Cardiac septum (tissue), 1 donor: ENCODE measurements at regions of chr3 and their contacts with region 1.

Region 1: DNA sequence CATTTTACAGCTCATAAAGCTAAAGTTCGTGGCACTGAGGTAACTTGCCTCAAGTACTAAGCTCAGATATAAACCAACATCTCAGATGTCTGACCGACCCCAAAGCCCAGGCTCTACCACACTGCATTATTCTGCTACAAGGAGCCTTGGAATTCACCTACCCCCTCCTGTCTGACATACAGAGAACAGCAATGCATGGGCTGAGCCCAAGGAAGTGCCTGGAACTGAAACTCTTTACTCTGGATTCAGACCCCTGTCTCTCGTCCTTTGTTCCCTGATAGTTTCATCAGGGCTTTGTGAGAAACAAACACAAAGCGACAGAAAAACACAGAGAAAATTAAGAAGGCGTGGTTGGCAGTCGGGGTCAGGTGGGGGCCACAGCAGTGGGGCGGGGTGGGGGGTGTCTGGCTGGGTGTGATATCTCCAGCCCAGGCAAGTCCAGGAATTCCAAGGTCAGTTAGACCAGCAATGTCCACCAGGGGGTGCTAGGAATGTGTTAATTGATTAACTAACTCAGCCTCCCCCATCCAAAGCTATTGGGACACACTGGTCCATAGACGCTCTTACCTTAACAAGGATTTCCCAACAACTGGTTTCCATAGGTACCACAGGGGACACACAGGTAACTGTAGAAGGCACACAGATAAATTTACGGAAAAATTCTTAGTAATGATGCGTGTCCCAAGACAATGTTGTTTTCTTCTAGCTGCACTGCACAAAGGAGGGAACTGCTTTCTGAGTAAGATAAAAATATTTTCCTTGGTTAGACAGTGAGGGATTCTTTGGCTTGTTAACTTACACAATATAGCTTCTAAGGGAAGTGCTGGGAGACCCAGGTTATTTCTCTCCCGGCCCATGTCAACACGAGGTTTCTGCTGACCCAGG is 18.8 kb upstream of the SSUH2 start:
- DNase-seq: no peak

Region 2: DNA sequence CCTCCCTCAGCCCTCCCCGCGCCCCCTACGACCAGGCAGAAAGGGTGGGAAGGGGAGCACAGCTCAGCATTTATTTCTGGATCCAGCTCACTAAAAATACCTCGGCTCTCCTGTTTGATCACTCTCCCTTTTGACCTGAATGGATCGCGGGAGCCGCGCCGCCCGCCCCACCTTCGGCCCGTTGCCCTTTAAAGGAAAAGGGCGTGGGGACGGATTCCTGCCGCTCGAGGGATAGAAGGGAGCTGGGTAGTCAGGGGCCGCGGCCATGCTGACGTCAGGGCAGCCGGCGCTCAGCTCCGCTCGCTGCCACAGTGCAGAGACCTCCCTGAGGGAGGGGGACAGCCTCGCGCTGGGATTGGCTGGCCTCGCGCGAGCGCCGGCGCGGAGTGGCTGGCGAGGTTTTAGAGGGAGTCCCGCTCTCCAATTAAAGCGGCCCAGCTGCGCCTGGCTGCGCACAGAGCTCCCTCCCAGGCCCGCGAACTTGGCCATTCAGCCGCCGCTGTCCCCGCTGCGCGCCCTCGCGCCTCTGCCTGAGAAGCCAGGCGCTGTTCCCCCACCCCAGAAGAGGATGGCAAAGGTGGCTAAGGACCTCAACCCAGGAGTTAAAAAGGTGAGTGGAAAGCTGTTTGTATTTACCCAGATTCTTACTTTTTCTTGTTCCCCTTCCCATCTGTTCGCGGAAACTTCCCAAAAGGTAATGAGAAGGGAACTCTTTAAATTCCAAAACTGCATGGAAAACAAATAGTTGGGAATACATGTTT is 161.9 kb before region 1 on chr3 and contains the start of gene LMCD1:
- intact Hi-C with region 1: loop called (anchors 5 kb)
- DNase-seq: peak; percentile 96
- total RNA-seq, gene LMCD1: 57.6 TPM

Region 3: GRCh38 chr3:8733332-8734094 is 70.1 kb after region 1 on chr3 and contains the start of gene CAV3:
- intact Hi-C with region 1: loop called (anchors 2 kb)
- DNase-seq: peak; percentile 77
- total RNA-seq, gene CAV3: 24.8 TPM

Region 4: DNA sequence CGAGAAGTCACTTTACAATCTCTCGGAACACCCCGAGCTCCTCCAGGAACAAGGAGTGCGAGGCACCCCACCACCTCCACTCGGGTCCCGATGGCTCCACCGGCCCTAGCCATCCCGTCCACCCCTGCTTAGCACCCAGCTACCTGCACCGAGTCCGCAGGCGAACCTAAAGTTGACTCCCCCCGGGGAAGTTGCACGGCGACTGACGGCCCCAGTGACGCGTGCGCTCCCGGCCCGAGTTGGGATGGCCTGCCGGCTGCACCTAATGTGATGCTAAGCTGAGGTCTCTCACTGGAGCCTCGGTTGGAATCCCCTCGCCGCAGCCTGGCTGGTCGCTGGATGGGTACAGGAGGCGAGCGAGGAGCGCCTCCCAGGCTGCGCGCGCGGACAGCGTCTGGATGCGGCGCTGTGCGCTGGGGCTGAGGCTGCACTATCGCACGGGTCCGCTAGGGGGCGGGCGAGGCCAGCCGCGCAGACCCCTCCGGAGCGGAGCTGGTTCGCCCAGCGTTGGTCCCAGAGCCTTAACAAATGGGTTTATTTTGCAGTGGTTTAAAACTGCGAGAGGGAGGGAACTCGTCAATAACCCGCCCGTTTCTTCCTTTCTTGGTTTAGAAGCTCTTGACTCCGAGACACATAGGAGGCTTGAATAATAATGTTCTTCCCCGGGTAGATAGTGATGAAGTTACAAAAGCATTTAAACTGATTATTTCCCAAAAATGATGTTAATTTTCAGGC is 105.8 kb after region 1 on chr3 and contains the start of gene OXTR:
- intact Hi-C with region 1: loop called (anchors 2 kb)
- DNase-seq: no peak
- total RNA-seq, gene OXTR: 0.30 TPM

Region 5: GRCh38 chr3:8963137-8963869 is 299.9 kb after region 1 on chr3 and contains the start of gene RAD18:
- intact Hi-C with region 1: loop called (anchors 10 kb)
- DNase-seq: peak; percentile 94
- total RNA-seq, gene RAD18: 3.2 TPM

Region 6: DNA sequence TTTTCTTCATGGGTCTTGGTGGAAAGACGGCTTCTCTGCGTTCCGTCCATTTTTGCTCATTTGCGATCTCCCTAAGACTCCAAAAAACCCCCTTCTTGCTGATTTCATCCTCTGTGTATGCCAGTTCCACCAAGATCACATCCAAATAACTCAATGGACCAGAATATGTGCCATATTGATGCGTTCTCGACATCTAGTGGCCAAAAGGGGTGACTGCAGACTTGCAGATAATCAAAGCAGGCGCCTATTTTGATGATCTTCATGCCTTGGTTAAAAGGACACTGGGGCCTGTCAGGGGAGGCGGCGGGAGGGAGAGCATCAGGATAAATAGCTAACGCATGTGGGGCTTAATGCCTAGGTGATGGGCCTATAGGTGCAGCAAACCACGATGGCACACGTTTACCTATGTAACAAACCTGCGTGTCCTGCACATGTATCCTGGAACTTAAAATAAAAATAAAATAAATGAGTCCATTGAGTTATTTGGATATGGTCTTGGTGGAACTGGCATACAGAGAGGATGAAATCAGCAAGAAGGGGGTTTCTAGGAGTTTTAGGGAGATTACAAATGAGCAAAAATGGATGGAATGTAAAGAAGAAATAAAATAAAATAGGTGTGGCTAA is 404.0 kb after region 1 on chr3:
- intact Hi-C with region 1: no loop called
- DNase-seq: no peak